MCF 10A (cell line): ENCODE measurements at regions of chr9 and their contacts with region 1.

Region 1: DNA sequence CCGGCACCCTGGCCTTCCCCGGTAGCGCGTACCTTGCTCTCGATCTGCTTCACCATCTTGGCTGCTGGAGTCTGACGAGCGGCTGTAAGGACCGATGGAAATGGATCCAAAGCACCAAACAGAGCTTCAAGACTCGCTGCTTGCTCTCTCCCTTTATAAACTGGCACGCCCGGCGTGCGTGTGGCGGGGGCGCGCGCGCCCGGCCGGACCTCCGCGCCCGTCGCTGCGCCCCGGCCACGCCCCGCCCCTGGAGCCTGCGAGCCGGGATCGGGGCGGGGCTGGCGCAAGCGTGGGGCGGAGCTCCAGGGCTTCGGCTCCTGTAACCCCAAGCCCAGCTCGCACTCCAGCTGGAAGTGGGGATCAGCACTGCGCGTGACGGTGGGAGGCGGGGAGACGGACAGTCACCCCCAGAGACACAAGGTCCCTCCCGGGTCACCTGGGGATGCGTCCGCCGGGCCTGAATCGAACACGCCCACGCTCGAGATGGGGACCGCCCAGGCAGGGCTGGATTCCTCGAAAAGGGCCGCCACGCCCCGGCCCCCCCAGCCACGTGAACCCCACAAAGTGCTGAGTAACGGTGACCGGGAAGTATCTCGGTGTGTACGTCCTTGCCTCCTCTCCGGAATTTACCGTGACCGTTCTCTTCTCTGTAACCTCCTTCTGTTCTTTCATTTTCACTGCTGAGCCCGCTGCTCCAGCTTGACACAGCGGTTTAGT is at the start of gene TXN:
- DNase-seq: peak; percentile 92
- H3K4me3 Mint-ChIP-seq: peak within 1 kb of the TSS; percentile 91
- H3K27ac Mint-ChIP-seq: peak within 1 kb of the TSS; percentile 92
- H3K4me1 Mint-ChIP-seq: peaks cover 40% of the 10 kb centered on the region
- H3K27me3 Mint-ChIP-seq: no peaks in the 10 kb centered on the region
- CTCF ChIP-seq: no peak
- total RNA-seq, gene TXN: 349 TPM in 2 replicates

Region 2: DNA sequence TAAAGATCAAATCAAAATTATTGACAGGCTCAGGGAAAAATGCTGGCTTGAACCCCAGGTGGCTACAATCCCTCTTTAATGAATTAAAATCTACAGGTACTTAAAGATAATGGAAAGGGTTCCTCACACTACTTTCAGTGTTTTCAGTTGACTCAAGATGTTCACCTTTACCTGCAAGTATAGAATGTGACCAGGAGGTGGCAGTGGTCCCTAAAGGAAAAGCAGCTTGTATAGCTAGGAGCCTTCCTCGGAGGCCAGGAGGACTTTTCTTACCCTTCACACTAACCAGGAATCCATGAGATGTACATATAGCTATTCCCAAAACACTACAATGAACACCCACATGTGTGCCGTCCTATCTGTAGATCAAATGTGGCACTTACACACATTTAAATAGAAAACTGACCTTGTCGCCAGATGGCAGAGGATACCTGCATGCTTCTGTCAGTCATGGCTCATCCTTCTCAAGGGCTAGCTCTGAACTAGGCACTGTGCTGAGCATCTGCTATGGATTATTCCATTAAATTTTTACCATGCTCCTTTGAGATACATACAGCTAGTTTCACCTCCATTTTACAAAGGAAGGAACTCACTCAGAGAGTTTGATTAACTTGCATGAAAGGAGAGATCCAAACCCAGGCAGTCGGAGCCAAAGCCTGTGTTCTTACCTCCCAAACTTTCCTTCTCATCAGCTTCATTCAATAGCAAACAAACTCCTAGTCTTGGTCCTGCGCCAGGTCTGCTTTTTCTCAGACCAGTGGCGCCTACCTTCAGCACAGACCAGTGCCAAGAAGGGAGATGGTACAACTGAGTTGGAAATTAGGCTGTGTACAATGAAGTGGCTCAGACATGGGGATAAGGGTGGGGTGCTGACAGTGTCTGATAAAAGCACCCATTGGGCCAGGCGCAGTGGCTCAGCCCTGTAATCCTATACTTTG is 73.1 kb before region 1 on chr9:
- CTCF ChIA-PET with region 1: interaction called, 4 read pairs
- POLR2A ChIA-PET with region 1: interaction called, 11 read pairs
- intact Hi-C with region 1: loop called (anchors 2 kb)
- DNase-seq: peak; percentile 86
- H3K4me3 Mint-ChIP-seq: no peak overlapping the region
- H3K27ac Mint-ChIP-seq: no peak overlapping the region
- H3K4me1 Mint-ChIP-seq: peaks cover 18% of the 10 kb centered on the region
- H3K27me3 Mint-ChIP-seq: no peaks in the 10 kb centered on the region
- CTCF ChIP-seq: peak; percentile 82

Region 3: GRCh38 chr9:110270211-110270995 is 13.9 kb after region 1 on chr9:
- CTCF ChIA-PET with region 1: interaction called, 7 read pairs
- POLR2A ChIA-PET with region 1: interaction called, 42 read pairs
- intact Hi-C with region 1: no loop called
- DNase-seq: no peak
- H3K4me3 Mint-ChIP-seq: no peak overlapping the region
- H3K27ac Mint-ChIP-seq: no peak overlapping the region
- H3K4me1 Mint-ChIP-seq: no peaks in the 10 kb centered on the region
- H3K27me3 Mint-ChIP-seq: no peaks in the 10 kb centered on the region
- CTCF ChIP-seq: no peak

Region 4: DNA sequence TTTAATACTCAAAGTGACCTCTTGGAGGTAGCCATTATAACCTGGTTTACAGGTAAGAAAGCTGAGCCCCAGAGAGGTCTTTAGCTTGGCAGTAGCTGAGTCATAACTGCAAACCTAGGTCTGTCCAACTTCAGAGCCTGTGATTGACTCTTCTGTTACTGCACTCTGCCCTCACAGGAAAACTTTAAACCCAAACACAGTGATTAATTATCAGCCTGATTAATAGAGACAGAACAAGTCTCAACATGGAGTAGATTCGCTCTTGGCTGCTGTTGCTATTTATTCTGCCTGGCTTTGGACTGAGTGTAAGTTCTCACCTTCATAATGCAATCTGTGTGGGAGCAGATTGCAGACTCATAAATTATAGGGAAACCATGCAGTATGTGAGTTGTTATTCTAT is 27.2 kb after region 1 on chr9:
- CTCF ChIA-PET with region 1: interaction called, 15 read pairs
- POLR2A ChIA-PET with region 1: interaction called, 155 read pairs
- intact Hi-C with region 1: no loop called
- DNase-seq: peak; percentile 86
- H3K4me3 Mint-ChIP-seq: peak overlapping the region; percentile 28
- H3K27ac Mint-ChIP-seq: peak overlapping the region; percentile 63
- H3K4me1 Mint-ChIP-seq: peaks cover 18% of the 10 kb centered on the region
- H3K27me3 Mint-ChIP-seq: no peaks in the 10 kb centered on the region
- CTCF ChIP-seq: no peak

Region 5: GRCh38 chr9:110351009-110351467 is 94.5 kb after region 1 on chr9:
- CTCF ChIA-PET with region 1: interaction called, 3 read pairs
- POLR2A ChIA-PET with region 1: interaction called, 28 read pairs
- intact Hi-C with region 1: loop called (anchors 2 kb)
- DNase-seq: peak; percentile 76
- H3K4me3 Mint-ChIP-seq: no peak overlapping the region
- H3K27ac Mint-ChIP-seq: peak overlapping the region; percentile 67
- H3K4me1 Mint-ChIP-seq: peaks cover 14% of the 10 kb centered on the region
- H3K27me3 Mint-ChIP-seq: no peaks in the 10 kb centered on the region
- CTCF ChIP-seq: no peak

Region 6: DNA sequence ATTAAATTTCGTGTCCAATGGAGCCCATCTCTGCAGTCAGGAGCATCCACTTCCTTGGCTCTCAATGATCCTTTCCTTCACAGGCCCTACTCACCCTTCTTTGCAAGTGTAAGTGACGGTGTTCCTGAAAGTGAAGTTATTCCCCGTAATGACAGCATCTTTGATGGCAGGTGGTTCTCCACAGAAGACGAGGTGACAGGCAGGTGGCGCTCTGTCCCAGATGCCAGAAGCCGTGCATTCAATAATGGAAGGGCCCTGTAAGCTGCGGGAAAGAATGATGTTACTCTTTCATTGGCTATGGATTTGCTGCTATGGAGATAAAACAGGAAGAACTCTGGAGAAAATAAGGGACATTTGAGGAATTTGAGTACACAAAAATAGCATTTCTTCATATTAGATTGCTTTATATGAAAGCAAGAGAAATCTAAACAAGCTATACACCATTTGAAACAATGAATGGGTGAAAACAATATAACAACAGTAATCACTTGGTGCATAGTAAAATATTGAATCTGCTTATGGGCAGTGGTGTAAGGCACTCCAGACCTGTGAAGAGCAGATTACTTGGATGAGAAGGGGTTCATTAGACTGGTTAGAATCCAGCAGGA is 171.1 kb after region 1 on chr9:
- CTCF ChIA-PET with region 1: interaction called, 7 read pairs
- POLR2A ChIA-PET with region 1: interaction called, 5 read pairs
- intact Hi-C with region 1: loop called (anchors 5 kb)
- DNase-seq: peak; percentile 49
- H3K4me3 Mint-ChIP-seq: no peak overlapping the region
- H3K27ac Mint-ChIP-seq: no peak overlapping the region
- H3K4me1 Mint-ChIP-seq: peaks cover 6% of the 10 kb centered on the region
- H3K27me3 Mint-ChIP-seq: no peaks in the 10 kb centered on the region
- CTCF ChIP-seq: peak; percentile 48